ENCODE measurements at regions of chr10 and their contacts with region 1.

Region 1: GRCh38 chr10:93947055-93947454 is 46.7 kb upstream of the PLCE1 start:
- DNase-seq: peak; percentile 86 to 88
- ATAC-seq: peak; percentile 99
- H3K4me3 ChIP-seq: peak overlapping the region in 1 of 4 donors; percentile 23
- H3K27ac ChIP-seq: peak overlapping the region; percentile 78 to 88 (median 82)
- H3K4me1 ChIP-seq: peaks cover 31 to 37% of the 10 kb centered on the region in 2 donors
- H3K27me3 ChIP-seq: no peaks in the 10 kb centered on the region
- CTCF ChIP-seq: no peak
- POLR2A ChIP-seq: no peak

Region 2: DNA sequence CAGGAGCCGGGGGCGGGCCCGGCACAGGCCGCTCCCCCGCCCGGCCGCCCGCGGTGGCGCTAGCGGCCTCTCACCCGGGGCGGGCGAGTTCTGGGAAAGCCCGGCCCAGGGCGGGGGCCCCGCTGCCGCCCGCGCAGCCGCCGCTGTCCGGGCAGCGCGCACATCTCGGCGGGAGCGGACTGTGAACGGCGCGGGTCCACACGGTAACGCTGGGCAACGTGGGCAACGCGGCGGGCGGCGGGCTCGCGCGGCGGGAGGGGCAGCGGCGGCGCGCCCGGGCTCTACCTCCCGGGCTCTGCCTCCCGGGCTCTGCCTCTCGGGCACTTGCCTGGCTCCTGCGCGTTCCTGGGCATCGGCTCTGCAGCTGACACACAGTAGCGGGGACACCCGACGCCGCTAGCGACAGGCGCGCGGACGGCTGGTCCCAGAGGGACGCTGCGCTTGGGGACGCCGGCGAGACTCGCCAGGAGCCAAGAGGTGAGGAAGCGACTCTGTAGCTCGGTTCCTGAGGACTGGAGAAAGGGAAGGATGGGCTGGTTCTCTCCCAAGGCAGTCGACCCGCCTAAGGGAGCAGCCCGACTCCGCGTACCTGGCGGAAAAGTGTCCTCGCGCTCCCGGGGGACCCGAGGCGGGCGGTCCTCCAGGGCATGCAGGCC is 46.9 kb after region 1 on chr10 and contains the start of gene PLCE1:
- in situ Hi-C with region 1: no loop called
- intact Hi-C with region 1: loop called (anchors 2 kb)
- DNase-seq: peak; percentile 24 to 68
- ATAC-seq: peak; percentile 80 to 89
- H3K4me3 ChIP-seq: peak within 1 kb of the TSS; percentile 50 to 58 (median 55)
- H3K27ac ChIP-seq: peak within 1 kb of the TSS; percentile 44 to 61 (median 56)
- H3K4me1 ChIP-seq: peaks cover 6 to 22% of the 10 kb centered on the region in 2 donors
- H3K27me3 ChIP-seq: no peaks in the 10 kb centered on the region
- CTCF ChIP-seq: peak in 1 of 5 experiments; percentile 22
- POLR2A ChIP-seq: peak; percentile 34 to 52
- total RNA-seq, gene PLCE1: 2.7 to 5.9 (median 3.8) TPM

Region 3: DNA sequence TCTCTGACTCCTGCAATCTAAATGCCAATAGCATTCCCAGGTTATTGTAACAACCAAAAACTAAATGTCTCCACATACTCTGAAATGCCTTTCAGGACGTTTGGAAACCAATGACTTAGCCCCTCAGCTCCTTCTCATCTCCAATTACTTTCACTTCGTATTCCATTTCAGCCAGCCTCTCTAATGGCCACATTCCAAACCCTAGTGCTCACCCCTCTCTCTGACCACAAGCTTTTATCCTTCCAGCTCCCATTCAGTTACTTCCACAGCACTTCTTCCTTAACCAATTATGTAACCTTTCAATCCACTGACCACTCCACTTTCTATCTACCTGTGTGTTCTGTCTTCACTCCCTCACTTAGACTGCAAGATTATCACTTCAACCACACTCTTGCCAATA is 411.4 kb after region 1 on chr10:
- in situ Hi-C with region 1: no loop called
- intact Hi-C with region 1: no loop called
- DNase-seq: no peak
- ATAC-seq: no peak
- H3K4me3 ChIP-seq: no peak overlapping the region
- H3K27ac ChIP-seq: no peak overlapping the region
- H3K4me1 ChIP-seq: peaks cover 16 to 17% of the 10 kb centered on the region in 2 donors
- H3K27me3 ChIP-seq: no peaks in the 10 kb centered on the region
- CTCF ChIP-seq: no peak
- POLR2A ChIP-seq: no peak